PC-9 (cell line): ENCODE measurements at regions of chr3 and their contacts with region 1.

Region 1: DNA sequence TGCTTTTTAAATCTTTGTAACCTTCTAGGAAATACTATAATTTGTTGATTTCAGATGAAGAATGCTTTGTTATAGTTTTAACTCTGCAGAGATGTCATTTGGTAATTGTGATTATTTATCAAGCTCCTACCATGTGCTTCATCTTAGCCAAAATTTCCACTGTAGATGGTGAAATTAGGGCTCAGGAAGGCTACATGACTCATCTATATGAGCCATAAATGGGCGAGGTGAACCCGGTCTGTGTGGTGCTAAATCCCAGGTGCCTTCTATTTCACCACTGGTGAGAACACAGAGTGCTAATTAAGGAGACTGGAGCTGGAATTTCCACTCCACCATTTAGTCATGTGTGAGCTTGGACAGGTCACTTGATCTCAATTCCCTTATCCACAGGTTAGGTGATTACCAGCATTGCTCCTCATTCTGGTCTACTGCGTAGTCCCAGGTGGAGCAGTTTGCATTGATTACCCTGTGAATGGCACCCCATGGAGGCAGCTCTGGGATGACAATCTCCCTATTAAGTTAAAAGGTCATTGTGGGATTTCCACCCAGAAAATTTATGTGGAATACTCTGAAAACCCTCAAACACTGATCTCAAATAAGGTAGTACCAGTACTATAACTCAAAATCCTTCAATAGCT is 2.8 kb upstream of the CCR3 start:
- DNase-seq: peak in 1 of 2 experiments; percentile 75
- H3K4me3 ChIP-seq: no peak overlapping the region
- H3K27ac ChIP-seq: peak overlapping the region; percentile 44; the same call in 1 of the 2 replicates
- H3K4me1 ChIP-seq: peaks cover 22% of the 10 kb centered on the region
- H3K27me3 ChIP-seq: no peaks in the 10 kb centered on the region
- CTCF ChIP-seq: no peak

Region 2: DNA sequence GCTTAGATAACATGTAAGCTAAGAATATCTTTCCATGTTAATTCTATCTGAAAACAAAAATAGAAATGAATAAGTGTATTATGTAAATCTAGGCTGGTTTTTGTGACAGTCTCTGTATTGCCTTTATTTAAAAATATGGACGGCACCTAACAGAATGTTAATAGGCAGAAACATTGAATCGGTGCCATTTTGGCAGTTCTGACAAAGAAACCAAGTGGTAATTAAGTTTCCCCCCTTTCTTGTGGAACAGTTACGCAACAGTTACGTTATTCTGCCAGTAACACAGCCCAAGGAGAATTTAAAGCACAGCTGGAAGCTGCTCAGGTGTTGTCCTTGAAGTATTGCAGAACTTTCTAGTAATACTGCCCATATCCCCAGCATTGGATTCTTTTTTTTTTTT is 829.5 kb before region 1 on chr3:
- CTCF ChIA-PET with region 1: no interaction called
- POLR2A ChIA-PET with region 1: interaction called, 17 read pairs
- intact Hi-C with region 1: no loop called
- DNase-seq: no peak
- H3K4me3 ChIP-seq: no peak overlapping the region
- H3K27ac ChIP-seq: no peak overlapping the region
- H3K4me1 ChIP-seq: no peaks in the 10 kb centered on the region
- H3K27me3 ChIP-seq: no peaks in the 10 kb centered on the region
- CTCF ChIP-seq: no peak

Region 3: DNA sequence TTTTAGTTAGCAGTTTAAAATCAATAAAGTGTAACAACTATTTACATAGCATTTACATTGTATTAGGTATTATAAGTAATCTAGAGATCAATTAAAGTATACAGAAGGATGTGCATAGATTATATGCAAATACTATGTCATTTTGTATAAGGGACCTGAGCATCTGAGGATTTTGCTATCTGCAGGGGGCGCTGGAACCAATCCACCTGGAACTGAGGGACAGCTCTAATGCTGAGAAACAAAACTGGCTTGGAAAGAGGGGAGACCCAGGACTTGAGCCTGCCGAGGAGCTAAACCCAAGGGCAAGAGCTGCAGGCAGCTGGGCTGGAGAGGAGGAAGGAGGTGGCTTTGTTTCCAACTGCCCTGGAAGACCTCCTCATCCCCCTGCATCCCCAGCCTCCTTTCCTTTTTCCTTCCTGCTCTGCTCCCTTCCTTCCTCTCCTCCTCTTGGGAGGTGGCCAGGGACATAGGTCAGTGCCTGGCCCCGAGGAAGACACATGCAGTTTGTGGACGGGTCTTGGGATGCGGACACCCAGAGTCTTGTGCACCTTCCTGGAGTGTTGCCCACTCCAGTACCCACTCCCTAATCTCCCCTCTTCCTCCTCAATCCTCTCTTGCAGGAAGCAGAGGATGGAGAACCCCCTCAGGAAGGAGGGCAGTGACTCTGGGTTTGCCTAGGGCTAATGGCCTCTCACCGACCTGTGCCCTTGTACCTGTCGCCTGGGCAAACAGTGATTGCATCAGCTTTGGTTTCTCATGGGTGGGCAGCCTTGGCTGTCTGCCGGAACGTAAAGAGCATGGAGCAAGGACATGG is 257.5 kb after region 1 on chr3:
- CTCF ChIA-PET with region 1: no interaction called
- POLR2A ChIA-PET with region 1: no interaction called
- intact Hi-C with region 1: no loop called
- DNase-seq: no peak
- H3K4me3 ChIP-seq: no peak overlapping the region
- H3K27ac ChIP-seq: no peak overlapping the region
- H3K4me1 ChIP-seq: peaks cover 13% of the 10 kb centered on the region
- H3K27me3 ChIP-seq: no peaks in the 10 kb centered on the region
- CTCF ChIP-seq: peak; percentile 49; the same call in 1 of the 2 replicates